ENCODE measurements at regions of chr4 and their contacts with region 1.

Region 1: GRCh38 chr4:38730830-38731646 is 51.8 kb downstream of the TLR10 start:
- DNase-seq: peak; percentile 81
- H3K4me3 Mint-ChIP-seq: no peak overlapping the region
- H3K27ac Mint-ChIP-seq: no peak overlapping the region
- H3K4me1 Mint-ChIP-seq: peaks cover 16% of the 10 kb centered on the region
- H3K27me3 Mint-ChIP-seq: no peaks in the 10 kb centered on the region
- CTCF ChIP-seq: peak; percentile 97

Region 2: GRCh38 chr4:38062088-38062893 is 668.7 kb before region 1 on chr4:
- CTCF ChIA-PET with region 1: interaction called, 12 read pairs
- POLR2A ChIA-PET with region 1: interaction called, 3 read pairs
- intact Hi-C with region 1: loop called (anchors 1 kb)
- DNase-seq: peak; percentile 83
- H3K4me3 Mint-ChIP-seq: peak overlapping the region; percentile 66
- H3K27ac Mint-ChIP-seq: peak overlapping the region; percentile 57
- H3K4me1 Mint-ChIP-seq: peaks cover 5% of the 10 kb centered on the region
- H3K27me3 Mint-ChIP-seq: no peaks in the 10 kb centered on the region
- CTCF ChIP-seq: peak; percentile 83

Region 3: GRCh38 chr4:38743866-38744265 is 12.8 kb after region 1 on chr4:
- CTCF ChIA-PET with region 1: interaction called, 20 read pairs
- POLR2A ChIA-PET with region 1: no interaction called
- intact Hi-C with region 1: no loop called
- DNase-seq: no peak
- H3K4me3 Mint-ChIP-seq: no peak overlapping the region
- H3K27ac Mint-ChIP-seq: no peak overlapping the region
- H3K4me1 Mint-ChIP-seq: peaks cover 6% of the 10 kb centered on the region
- H3K27me3 Mint-ChIP-seq: no peaks in the 10 kb centered on the region
- CTCF ChIP-seq: no peak

Measured in MCF 10A (cell line).